HepG2 (cell line): ENCODE measurements at regions of chr12 and their contacts with region 1.

Region 1: GRCh38 chr12:82685790-82686167 is 927 bp upstream of the TMTC2 start:
- DNase-seq: peak; percentile 88
- ATAC-seq: peak; percentile 84
- H3K4me3 ChIP-seq: peak overlapping the region; percentile 76 to 91 (median 82)
- H3K27ac ChIP-seq: no peak overlapping the region
- H3K4me1 ChIP-seq: peaks cover 19% of the 10 kb centered on the region
- H3K27me3 ChIP-seq: peaks cover 0 to 3% of the 10 kb centered on the region in 2 experiments; a peak in 2 of 5 replicates
- CTCF ChIP-seq: peak; percentile 97
- EP300 ChIP-seq: no peak
- POLR2A ChIP-seq: no peak
- RAD21 ChIP-seq: peak; percentile 86

Region 2: DNA sequence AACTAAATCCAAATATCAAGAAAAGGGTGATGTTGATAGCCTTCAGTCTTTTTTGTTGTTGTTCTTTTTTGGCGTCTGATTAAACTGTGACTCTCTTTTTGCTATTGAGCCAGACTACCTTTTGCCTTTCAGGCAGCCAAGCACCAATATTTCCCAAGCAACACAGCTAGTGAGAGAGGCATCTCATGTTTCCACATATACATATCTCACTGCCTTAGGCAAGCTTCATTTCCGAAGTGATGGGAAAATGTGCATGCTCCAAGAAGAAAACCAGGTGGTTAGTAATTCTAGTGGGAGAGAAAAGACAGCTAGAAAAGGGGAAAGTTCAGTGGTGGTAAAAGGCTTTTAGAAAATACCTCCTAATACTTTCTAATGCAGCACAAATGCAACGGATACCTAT is 278.7 kb after region 1 on chr12:
- CTCF ChIA-PET with region 1: no interaction called
- POLR2A ChIA-PET with region 1: no interaction called
- in situ Hi-C with region 1: no loop called
- intact Hi-C with region 1: no loop called
- DNase-seq: no peak
- ATAC-seq: no peak
- H3K4me3 ChIP-seq: no peak overlapping the region
- H3K27ac ChIP-seq: no peak overlapping the region
- H3K4me1 ChIP-seq: no peaks in the 10 kb centered on the region
- H3K27me3 ChIP-seq: no peaks in the 10 kb centered on the region
- CTCF ChIP-seq: no peak
- EP300 ChIP-seq: no peak
- POLR2A ChIP-seq: no peak
- RAD21 ChIP-seq: no peak

Region 3: GRCh38 chr12:83823431-83823963 is 1137.7 kb after region 1 on chr12:
- CTCF ChIA-PET with region 1: interaction called, 3 read pairs
- POLR2A ChIA-PET with region 1: no interaction called
- in situ Hi-C with region 1: loop called (anchors 25 kb)
- intact Hi-C with region 1: no loop called
- DNase-seq: peak; percentile 27
- ATAC-seq: peak; percentile 87
- H3K4me3 ChIP-seq: no peak overlapping the region
- H3K27ac ChIP-seq: no peak overlapping the region
- H3K4me1 ChIP-seq: no peaks in the 10 kb centered on the region
- H3K27me3 ChIP-seq: no peaks in the 10 kb centered on the region
- CTCF ChIP-seq: peak; percentile 42; the same call in 1 of the 2 replicates
- EP300 ChIP-seq: no peak
- POLR2A ChIP-seq: no peak
- RAD21 ChIP-seq: no peak

Region 4: DNA sequence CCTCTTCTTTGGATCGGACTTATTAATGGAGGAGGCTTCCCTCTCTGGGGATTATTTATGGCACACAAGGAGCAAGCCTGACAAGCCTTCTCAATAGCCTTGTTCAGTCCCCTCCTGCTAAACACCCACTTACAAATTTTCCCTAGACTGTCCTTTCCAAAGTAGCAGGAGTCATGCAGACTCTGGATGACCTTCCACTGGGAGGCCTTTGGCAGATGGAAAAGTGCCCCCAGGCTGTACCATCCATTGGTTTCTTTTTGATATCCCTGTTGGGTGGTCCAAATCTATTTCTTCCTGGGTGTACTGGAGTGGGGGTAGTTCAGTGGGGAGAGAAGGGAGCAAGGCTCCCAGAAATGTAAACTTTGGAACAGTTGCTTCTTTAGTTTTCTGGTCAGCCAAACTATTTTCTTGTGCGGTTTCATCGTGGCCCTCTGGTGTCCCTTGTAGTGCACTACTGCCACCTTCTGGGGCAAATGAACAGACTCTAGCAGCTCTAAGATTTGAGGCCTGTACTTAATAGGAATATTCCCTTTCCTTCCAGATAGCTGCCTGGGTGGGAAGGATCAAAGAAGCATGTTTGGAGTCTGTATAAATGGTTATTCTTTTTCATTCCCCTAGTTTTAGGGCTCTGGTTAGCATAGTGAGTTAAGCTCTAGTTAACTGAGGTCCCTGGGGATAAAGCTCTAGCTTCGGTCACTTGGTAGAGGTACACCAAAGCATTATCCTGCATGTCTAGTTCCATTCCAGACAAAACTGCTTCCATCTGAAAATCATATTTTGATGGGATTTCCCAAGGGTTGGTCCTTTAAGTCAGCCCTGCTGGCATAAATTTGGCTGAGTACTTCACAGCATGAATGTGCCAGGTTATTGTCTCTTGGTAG is 1817.4 kb after region 1 on chr12:
- CTCF ChIA-PET with region 1: interaction called, 8 read pairs
- POLR2A ChIA-PET with region 1: no interaction called
- in situ Hi-C with region 1: loop called (anchors 5 kb)
- intact Hi-C with region 1: loop called (anchors 1 kb)
- DNase-seq: peak; percentile 16
- ATAC-seq: peak; percentile 97
- H3K4me3 ChIP-seq: no peak overlapping the region
- H3K27ac ChIP-seq: no peak overlapping the region
- H3K4me1 ChIP-seq: no peaks in the 10 kb centered on the region
- H3K27me3 ChIP-seq: no peaks in the 10 kb centered on the region
- CTCF ChIP-seq: peak; percentile 67
- EP300 ChIP-seq: no peak
- POLR2A ChIP-seq: no peak
- RAD21 ChIP-seq: peak; percentile 33; the same call in 1 of the 2 replicates

Region 5: DNA sequence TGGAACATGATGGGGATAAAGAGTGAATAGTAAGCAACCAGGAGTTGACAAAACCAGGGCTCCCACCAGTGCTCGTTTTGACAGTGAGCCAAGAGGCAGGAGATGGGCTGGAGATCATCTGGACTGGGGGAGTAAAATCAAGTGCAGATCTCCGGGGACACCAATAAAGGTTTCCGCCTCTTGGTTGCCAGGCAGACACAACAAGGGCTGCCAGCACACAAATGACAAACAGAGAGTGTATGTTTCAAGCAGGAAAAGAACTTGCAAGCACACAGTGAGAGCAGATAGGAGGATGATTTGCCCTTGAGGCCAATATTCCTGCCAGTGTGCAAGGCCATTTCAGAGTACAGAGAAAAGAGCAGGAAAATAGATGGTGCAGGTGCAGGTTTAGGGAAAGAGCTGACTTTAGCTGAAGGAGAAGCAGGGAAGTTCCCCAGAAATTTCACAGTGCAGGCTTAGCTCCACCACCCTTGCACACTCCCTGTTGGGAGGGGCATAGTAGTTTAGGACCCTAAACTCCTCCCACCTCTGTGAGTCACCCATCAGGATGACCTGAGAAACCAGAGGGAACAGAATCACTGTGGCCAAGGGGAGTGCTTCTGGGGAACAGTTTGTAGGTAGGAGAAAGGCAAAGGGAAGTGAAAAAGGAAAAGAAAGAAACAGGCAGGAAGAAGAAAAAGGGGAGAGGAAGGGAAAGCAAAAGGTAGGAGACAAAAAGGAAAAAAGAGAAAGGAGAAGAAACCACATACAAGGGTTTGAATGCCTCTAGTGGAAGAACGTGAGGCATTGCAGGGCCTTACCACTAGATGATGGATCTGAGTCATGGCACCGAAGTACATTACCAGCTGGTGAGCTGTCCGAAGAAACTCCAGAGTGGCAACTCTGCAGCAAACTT is 1822.4 kb after region 1 on chr12:
- CTCF ChIA-PET with region 1: interaction called, 8 read pairs
- POLR2A ChIA-PET with region 1: no interaction called
- in situ Hi-C with region 1: loop called (anchors 5 kb)
- intact Hi-C with region 1: loop called (anchors 1 kb)
- DNase-seq: peak; percentile 12
- ATAC-seq: peak; percentile 87
- H3K4me3 ChIP-seq: no peak overlapping the region
- H3K27ac ChIP-seq: no peak overlapping the region
- H3K4me1 ChIP-seq: no peaks in the 10 kb centered on the region
- H3K27me3 ChIP-seq: no peaks in the 10 kb centered on the region
- CTCF ChIP-seq: no peak
- EP300 ChIP-seq: no peak
- POLR2A ChIP-seq: no peak
- RAD21 ChIP-seq: no peak